ENCODE measurements at regions of chr14 and their contacts with region 1.

Region 1: GRCh38 chr14:64891839-64892375 is 12.2 kb upstream of the SPTB start:
- DNase-seq: peak; percentile 34
- H3K4me3 ChIP-seq: no peak overlapping the region
- H3K27ac ChIP-seq: no peak overlapping the region
- H3K27me3 ChIP-seq: peaks cover 19% of the 10 kb centered on the region
- CTCF ChIP-seq: peak; percentile 55

Region 2: DNA sequence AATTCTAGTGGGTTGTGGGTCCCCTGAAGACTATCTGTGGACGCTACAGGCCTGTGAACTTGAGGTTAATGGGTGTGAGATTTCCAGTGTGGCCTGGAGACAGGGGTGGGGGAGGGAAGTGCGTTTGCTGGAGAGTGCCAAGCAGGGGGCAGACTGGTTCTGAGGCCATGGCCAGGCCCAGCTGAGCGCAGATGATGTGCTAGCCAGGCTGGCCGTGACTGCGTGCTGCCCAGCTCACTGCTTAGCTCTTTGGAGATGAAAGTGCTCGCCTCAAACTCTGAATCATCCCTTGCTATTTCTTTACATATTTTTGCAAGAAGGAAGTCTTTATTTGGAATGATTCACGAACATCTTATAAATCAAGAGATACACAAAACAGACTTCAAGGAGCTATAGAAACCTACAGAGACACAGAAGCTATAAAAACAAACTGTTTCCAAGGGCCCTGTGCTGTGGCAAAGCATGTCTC is 262.9 kb before region 1 on chr14:
- CTCF ChIA-PET with region 1: interaction called, 10 read pairs
- POLR2A ChIA-PET with region 1: no interaction called
- DNase-seq: peak; percentile 87
- H3K4me3 ChIP-seq: no peak overlapping the region
- H3K27ac ChIP-seq: peak overlapping the region; percentile 97
- H3K27me3 ChIP-seq: no peaks in the 10 kb centered on the region
- CTCF ChIP-seq: peak; percentile 17; the same call in 1 of the 2 replicates

Region 3: DNA sequence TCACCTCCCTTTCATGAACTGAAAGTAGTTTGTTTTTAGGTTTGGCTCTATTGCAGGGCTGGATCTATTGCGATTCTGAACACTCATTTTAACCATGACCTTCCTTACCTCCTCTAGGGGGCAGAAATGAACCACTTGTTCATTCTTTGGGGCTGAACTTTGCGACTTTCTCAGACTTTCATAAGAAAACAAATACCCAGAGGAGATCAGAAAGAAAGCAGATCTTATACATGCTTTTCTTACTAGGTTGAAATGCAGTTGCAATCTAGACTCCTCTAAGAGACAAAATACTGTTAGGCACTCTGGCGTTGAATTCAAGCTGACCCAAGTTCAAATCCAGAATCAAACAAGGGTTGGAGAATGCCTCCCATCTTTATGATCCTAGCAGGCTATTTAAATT is 220.3 kb before region 1 on chr14:
- CTCF ChIA-PET with region 1: interaction called, 95 read pairs
- POLR2A ChIA-PET with region 1: no interaction called
- DNase-seq: peak; percentile 39
- H3K4me3 ChIP-seq: no peak overlapping the region
- H3K27ac ChIP-seq: no peak overlapping the region
- H3K27me3 ChIP-seq: peaks cover 7% of the 10 kb centered on the region
- CTCF ChIP-seq: peak; percentile 89

Region 4: DNA sequence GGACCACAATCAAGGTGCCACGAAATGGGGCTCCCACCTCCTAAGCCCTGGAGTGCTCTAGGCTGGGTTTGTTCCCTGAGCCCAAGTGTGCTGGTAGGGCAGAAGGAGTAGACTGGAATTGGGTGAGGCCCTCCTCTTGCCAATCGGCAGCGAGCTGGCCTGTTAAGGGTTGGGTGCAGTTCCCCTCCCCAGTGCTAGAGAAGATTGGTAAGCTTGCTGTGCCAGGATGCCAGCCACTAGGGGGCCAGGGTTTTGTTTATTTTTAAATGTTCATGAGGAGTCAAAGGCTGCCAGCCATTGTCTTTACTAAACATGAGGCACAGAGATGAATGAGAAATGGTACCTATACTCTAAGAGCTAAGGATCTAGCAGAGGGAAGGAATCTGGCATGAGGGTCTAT is 91.9 kb before region 1 on chr14:
- CTCF ChIA-PET with region 1: interaction called, 58 read pairs
- POLR2A ChIA-PET with region 1: no interaction called
- DNase-seq: no peak
- H3K4me3 ChIP-seq: no peak overlapping the region
- H3K27ac ChIP-seq: no peak overlapping the region
- H3K27me3 ChIP-seq: peaks cover 16% of the 10 kb centered on the region
- CTCF ChIP-seq: peak; percentile 48

Region 5: GRCh38 chr14:64841121-64841651 is 50.7 kb before region 1 on chr14:
- CTCF ChIA-PET with region 1: interaction called, 10 read pairs
- POLR2A ChIA-PET with region 1: no interaction called
- DNase-seq: peak; percentile 26
- H3K4me3 ChIP-seq: no peak overlapping the region
- H3K27ac ChIP-seq: no peak overlapping the region
- H3K27me3 ChIP-seq: peaks cover 44% of the 10 kb centered on the region
- CTCF ChIP-seq: peak; percentile 64

Region 6: DNA sequence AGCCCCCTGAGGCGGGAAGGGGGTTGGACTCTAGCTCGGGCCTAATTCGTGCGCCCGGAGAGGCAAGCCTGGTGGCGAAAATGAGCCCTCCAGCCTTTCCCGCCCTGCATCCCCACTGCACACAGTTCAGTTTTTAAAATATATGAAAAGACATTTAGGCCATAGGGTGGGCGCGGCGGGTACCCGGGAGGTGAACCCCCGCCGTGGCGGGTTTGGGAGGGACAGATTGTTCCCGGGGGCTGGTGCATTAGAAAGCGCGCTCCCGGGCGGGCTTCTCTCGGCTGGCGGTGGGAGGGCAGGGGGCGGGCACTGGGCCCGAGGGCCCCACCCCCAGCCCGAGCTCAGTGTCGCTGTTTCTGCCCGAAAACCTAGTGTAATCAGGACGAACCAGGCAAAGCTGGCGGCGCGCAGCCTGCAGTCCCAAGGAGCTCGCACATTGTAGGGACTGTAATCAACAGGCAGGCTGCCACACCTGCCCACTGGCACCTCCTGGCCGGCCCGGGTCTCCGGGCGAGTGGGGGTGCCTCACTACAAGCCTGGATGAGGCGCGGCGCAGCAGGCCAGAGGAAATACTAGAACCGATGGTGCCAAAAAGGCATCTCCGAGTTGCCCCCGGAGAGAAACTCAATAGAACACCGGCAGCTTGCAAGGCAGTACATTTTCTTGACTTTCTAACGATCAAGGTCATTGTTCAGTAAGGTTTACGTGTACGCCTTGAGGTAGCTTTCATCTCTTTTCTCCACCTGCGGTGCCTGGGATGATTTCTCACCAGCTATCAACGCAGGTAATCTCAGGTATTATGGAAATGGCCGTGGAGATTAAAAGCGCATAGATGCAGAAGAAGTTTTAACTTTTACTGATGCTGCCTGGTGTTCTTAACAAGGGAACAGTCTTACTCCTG is 11.4 kb before region 1 on chr14:
- CTCF ChIA-PET with region 1: interaction called, 43 read pairs
- POLR2A ChIA-PET with region 1: no interaction called
- DNase-seq: no peak
- H3K4me3 ChIP-seq: peak overlapping the region; percentile 29; the same call in 1 of the 2 replicates
- H3K27ac ChIP-seq: no peak overlapping the region
- H3K27me3 ChIP-seq: peaks cover 79% of the 10 kb centered on the region
- CTCF ChIP-seq: no peak

Measured in AG04450 (cell line).